ENCODE measurements at regions of chr5 and their contacts with region 1.

Region 1: GRCh38 chr5:142748568-142749249 is 21.5 kb upstream of the ARHGAP26 start:
- DNase-seq: peak; percentile 41

Region 2: DNA sequence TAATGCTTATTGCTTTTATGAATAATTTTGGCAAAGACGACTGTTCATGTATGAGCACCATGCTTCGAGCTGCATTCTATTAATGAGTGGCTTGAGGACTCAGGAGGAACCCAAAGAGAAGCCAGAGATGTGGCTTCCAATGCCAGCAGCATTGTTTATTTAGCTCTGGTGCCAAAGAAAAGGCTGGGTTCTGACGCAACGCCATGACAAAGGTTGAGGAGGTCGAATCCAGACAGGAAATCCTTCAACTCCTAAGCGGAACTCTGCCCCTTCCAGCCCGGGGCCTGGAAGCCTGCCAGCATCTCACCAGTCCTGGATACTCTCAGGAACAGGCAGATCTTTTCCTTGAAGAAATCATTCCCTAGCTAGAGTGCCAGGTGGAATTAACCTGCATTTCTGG is 125.8 kb after region 1 on chr5:
- CTCF ChIA-PET with region 1: interaction called, 51 read pairs
- POLR2A ChIA-PET with region 1: no interaction called
- DNase-seq: no peak

Region 3: DNA sequence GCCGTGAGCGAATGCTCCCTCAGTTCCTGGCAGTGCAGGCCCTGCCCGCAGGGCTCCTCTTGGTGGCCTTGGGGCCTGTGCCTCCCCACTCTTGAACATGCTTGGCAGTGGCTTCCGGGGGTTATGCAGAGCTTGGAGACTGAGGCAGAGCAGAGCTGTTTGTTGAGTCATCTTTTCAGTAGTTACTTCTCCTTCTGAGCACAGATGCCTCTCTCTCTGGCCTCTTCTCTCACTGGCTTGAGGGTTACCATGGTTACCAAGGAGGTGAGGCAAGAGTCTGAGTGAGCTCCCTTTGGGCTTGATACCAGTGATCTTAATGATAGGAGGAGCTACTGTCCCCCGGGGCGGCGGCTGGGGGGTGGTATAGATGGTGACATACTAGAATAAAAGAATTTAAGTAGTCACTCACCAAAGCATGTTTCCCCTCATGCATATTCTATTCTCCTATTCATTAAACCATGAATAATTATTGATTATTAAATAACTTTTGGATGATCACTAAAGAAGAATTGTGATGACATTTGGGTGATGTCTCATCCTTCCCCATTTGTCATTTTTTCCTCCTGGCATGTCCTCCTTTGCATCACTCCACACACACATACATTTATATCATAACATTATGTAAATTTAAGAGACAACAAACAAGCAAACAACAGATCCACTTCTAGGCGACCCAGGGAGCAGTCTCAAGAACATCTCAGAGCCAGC is 132.5 kb after region 1 on chr5:
- CTCF ChIA-PET with region 1: interaction called, 51 read pairs
- POLR2A ChIA-PET with region 1: no interaction called
- DNase-seq: no peak

Region 4: DNA sequence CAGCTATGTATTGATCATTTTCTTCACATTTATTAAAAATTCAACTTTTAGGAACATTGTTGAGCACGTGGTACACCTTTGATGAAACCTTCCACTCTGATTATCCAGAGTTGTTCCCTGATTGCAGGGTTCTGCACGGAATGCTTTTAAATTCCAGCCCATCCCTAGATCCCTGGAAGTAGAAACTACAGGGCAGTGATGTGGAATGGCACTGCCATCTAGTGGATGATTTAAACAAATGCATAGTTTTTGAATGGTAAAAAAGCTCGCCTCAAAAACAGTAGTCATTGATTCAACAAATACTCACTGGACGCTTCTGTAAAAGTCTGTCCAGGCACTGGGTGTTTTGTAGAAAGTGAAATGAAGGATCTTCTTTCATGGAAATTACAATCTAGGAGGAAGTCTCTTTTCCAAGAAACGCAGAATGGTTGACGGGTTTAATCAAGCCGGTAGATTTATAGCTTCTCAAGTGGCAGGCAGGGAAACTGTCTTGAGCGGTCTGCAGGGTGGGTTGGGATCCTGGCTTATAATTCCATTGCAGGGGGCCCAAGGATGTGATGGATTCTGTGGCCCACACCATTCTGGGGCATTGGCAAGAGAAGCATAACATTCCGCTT is 139.9 kb after region 1 on chr5:
- CTCF ChIA-PET with region 1: interaction called, 23 read pairs
- POLR2A ChIA-PET with region 1: no interaction called
- DNase-seq: peak; percentile 67

Measured in HEK293T (cell line).